AG04450 (cell line): ENCODE measurements at regions of chr5 and their contacts with region 1.

Region 1: DNA sequence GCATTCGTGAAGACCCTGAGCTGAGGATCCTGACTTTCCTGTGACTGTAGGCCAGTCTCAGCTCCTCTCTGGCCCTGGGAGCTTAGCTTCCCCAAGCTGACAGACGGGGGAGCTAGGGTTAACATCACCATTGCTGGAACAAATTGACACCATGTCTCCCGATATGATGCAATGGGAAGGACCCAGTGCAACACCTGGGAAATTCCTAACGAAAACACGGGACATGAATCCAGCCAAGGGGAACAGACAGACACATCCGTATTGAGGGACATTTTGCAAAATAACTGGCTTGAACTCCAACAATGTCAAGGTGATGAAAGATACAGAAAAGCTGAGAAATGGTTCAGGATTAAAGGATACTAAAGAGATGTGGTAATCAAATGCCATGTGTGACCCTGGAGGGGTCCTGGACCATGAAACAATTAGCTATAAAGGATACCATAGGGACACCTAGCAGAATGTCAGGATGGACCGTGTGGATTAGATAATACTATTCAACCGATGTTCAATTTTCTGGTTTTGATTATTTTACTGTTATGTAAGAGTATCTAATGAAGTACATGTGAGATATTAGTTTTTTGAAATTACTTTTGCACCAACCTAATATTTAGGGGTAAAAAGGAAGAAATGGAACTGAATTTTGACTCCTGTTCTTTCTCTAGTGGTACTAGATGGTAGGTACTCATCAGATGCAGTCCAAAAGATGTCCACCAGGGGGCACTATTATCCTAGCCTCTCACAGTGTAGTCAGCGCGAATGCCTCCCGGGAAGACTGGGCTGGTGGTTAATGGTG is 52.7 kb downstream of the NDST1 start:
- DNase-seq: peak; percentile 67
- H3K4me3 ChIP-seq: no peak overlapping the region
- H3K27ac ChIP-seq: peak overlapping the region; percentile 47
- H3K27me3 ChIP-seq: no peaks in the 10 kb centered on the region
- CTCF ChIP-seq: peak; percentile 87

Region 2: DNA sequence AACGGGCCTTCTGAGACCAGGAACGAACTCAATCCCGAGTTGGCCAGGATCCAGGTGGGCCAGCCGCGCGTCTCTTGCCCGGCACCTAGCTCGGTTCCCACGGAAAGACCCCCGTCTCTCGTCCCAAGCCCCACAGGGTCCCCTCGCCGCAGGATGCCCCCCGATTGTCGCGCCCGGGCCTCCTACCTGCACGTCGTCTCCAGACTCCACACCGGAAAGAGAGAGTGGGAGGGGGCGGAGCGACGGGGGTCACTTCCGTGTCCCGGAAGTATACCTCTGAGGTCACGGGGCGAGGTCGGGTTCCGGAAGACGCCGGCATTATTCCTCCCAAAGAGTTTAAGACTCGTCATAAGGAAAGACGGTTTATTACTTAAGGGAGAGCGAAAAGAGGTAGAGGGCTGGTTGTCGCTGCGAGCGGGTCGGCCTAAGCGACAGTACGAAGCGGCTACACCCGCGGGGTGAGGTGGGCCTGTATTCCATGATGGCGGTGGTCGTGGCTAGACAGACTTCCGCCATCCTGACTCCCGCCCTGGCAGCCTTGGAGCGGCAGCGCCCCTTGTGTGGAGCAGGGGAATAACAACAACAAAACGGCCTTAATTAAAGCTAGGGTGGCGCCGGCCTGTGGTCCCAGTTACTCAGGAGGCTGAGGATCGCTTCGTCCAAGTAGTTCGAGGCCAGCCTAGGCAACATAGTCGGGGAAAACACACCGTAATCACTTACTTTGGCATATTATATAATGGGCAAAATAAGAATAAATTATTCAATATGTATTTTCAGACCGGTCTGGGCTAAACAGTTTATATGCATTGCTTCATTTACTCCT is 110.9 kb before region 1 on chr5 and contains the start of gene RPS14:
- CTCF ChIA-PET with region 1: interaction called, 10 read pairs
- POLR2A ChIA-PET with region 1: interaction called, 7 read pairs
- DNase-seq: peak; percentile 76
- H3K4me3 ChIP-seq: peak within 1 kb of the TSS; percentile 97
- H3K27ac ChIP-seq: peak within 1 kb of the TSS; percentile 94
- H3K27me3 ChIP-seq: no peaks in the 10 kb centered on the region
- CTCF ChIP-seq: peak; percentile 85
- polyA plus RNA-seq, gene RPS14: 3,620 and 4,046 TPM in 2 replicates

Region 3: DNA sequence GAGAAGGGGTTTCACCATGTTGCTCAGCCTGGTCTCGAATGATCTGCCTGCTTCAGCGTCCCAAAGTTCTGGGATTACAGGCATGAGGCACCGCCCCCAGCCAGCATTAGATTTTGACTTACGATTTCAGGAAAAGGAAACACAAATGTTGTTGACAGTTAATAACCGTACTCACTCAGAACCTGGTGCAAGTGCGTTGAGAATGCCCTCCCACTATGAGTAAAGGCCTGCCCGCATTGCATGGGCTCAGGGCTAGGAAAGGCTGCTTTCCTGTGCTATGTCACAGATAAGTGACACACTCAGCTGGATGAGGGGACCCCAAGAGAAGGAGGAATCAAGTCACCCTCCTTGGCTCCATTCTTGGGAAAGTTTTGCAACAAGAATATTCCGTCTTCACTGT is 10.3 kb before region 1 on chr5:
- CTCF ChIA-PET with region 1: interaction called, 15 read pairs
- POLR2A ChIA-PET with region 1: no interaction called
- DNase-seq: no peak
- H3K4me3 ChIP-seq: no peak overlapping the region
- H3K27ac ChIP-seq: no peak overlapping the region
- H3K27me3 ChIP-seq: no peaks in the 10 kb centered on the region
- CTCF ChIP-seq: no peak

Region 4: GRCh38 chr5:150662731-150663516 is 102.3 kb after region 1 on chr5:
- CTCF ChIA-PET with region 1: interaction called, 130 read pairs
- POLR2A ChIA-PET with region 1: interaction called, 3 read pairs
- DNase-seq: no peak
- H3K4me3 ChIP-seq: no peak overlapping the region
- H3K27ac ChIP-seq: no peak overlapping the region
- H3K27me3 ChIP-seq: peaks cover 18% of the 10 kb centered on the region
- CTCF ChIP-seq: no peak

Region 5: GRCh38 chr5:150700594-150701293 is 140.1 kb after region 1 on chr5 and contains the start of gene RBM22:
- CTCF ChIA-PET with region 1: interaction called, 40 read pairs
- POLR2A ChIA-PET with region 1: interaction called, 5 read pairs
- DNase-seq: peak; percentile 58
- H3K4me3 ChIP-seq: peak within 1 kb of the TSS; percentile 95
- H3K27ac ChIP-seq: peak within 1 kb of the TSS; percentile 91
- H3K27me3 ChIP-seq: no peaks in the 10 kb centered on the region
- CTCF ChIP-seq: peak; percentile 63
- polyA plus RNA-seq, gene RBM22: 42.4 and 49.5 TPM in 2 replicates

Region 6: GRCh38 chr5:150846654-150847333 is 286.2 kb after region 1 on chr5:
- CTCF ChIA-PET with region 1: interaction called, 14 read pairs
- POLR2A ChIA-PET with region 1: no interaction called
- DNase-seq: peak; percentile 72
- H3K4me3 ChIP-seq: no peak overlapping the region
- H3K27ac ChIP-seq: no peak overlapping the region
- H3K27me3 ChIP-seq: peaks cover 3% of the 10 kb centered on the region
- CTCF ChIP-seq: peak; percentile 67